Right cardiac atrium (tissue), 5 donors: ENCODE measurements at regions of chr1 and their contacts with region 1.

Region 1: DNA sequence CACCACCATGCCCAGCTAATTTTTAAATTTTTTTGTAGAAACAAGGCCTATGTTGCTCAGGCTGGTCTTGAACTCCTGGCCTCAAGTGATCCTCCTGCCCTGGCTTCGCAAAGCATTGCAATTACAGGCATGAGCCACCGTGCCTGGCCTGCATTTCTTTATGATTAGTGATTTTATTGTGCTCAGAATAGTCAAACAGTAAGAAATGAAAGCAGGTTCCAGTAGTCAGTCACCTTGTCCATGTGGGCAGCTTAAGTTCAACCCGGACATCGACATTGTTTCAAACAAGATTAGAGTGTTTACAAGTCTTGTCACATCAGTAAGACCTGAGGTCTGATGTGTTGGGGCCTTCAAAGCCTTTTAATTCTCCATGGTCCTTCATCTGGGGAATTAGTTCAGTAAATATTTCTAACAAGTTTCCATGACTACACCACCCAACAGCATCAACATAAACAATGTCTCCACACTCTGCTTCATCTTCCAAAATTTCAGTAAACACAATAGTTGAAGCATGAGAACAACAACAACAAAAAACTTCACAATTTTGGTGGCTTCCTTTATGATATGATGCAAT is 15.1 kb upstream of the ADORA1 start:
- DNase-seq: no peak
- ATAC-seq: no peak
- H3K4me3 ChIP-seq: no peak overlapping the region
- H3K27ac ChIP-seq: no peak overlapping the region
- H3K4me1 ChIP-seq: no peaks in the 10 kb centered on the region
- H3K27me3 ChIP-seq: no peaks in the 10 kb centered on the region

Region 2: GRCh38 chr1:203069030-203069747 is 43.2 kb before region 1 on chr1:
- intact Hi-C with region 1: no loop called
- DNase-seq: no peak
- ATAC-seq: peak; percentile 83 to 88
- H3K4me3 ChIP-seq: no peak overlapping the region
- H3K27ac ChIP-seq: peak overlapping the region; percentile 88
- H3K4me1 ChIP-seq: peaks cover 9% of the 10 kb centered on the region
- H3K27me3 ChIP-seq: no peaks in the 10 kb centered on the region

Region 3: GRCh38 chr1:203172128-203173010 is 60.0 kb after region 1 on chr1:
- intact Hi-C with region 1: loop called in 1 of 4 experiments (anchors 5 kb)
- DNase-seq: peak; percentile 44 to 84 (median 72)
- ATAC-seq: peak; percentile 36 to 57
- H3K4me3 ChIP-seq: no peak overlapping the region
- H3K27ac ChIP-seq: no peak overlapping the region
- H3K4me1 ChIP-seq: peaks cover 6% of the 10 kb centered on the region
- H3K27me3 ChIP-seq: no peaks in the 10 kb centered on the region